ENCODE measurements at regions of chr7 and their contacts with region 1.

Region 1: GRCh38 chr7:101542527-101543241 is 86.4 kb downstream of the MYL10 start:
- DNase-seq: no peak
- ATAC-seq: no peak

Region 2: DNA sequence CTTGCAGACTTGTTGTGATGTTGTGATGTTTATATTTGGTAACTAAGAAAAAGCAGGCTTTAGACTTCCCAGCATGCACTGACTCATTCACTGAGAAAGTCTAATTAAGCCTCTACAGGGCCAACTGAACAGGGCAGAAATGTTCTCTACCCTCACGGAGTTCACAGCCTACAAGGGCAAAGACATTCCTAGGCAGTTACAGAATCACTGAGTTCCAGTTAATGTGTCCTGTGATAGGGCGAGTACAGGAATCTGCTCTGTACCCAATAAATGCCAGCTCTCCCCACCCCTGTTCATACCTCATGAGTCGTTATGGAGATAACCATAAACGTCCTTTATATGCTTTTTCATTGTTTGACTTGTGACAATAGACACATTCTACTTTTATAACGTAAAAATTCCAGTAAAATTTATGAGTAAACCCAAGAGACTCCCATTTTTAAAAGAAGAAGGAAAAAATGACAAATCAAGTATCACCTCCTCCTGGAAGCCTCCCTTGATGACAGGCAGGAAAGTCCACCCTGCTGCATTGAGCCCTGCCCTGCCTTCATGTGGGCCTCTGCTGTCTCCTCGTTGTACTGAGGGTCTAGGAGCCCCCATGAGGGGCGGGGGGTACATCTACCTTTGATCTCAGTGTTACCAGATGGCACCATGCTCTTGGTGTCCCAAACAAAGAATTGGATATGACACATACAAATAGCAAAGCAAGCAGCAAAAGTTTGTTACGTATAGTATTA is 559.1 kb before region 1 on chr7:
- intact Hi-C with region 1: no loop called
- DNase-seq: no peak
- ATAC-seq: no peak

Region 3: GRCh38 chr7:101363734-101364374 is 178.8 kb before region 1 on chr7:
- intact Hi-C with region 1: loop called (anchors 2 kb)
- DNase-seq: no peak
- ATAC-seq: peak; percentile 95

Region 4: DNA sequence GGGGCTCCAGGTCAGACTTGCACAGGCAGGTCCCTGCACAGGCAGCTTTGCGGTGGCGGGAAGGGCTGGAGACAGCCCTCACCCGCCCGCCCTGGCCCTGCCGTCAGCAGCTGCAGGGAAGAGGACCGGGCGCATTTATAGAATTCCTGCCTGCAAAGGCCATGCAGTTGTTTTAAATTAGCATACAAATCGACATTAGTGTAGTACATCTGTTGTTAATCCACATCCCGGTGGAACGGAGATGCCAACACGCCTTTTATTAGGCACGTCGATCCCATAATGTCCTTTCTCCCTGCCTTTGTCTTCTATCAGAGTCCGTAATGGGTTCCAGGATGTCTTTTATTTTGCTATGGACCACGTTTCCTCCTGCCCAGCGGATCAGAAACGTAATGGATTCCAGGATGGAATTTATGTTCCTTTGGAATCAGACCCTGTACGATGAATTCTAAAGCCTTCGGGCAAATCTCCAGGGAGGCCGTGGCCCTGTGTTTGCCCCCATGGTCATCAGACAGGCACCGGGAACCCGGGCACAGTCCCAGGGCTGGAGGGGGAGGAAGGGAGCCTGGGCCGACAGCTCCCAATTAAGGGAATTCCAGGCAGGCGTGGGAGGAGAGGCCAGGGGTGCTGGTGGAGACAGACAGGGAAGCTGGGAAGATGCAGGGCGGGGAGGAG is 56.1 kb before region 1 on chr7:
- intact Hi-C with region 1: no loop called
- DNase-seq: no peak
- ATAC-seq: no peak

Region 5: DNA sequence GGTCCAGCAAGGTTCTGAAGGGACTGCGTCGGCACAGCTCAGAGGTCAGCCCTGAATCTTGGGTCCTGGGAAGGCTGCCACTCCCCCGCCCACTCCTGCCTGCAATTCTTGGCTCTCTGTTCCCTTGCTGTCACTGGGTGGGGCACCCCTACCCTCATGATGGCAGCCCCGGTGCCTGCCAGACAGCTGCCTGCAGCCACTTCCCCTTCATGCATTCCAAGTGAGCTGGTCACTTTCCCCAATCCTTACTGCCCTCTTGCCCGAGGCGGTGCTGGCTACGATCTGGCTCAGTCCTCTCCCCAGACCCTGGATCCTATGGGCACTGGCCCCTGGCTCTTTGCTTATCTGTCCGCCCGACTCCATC is 72.2 kb after region 1 on chr7:
- intact Hi-C with region 1: no loop called
- DNase-seq: no peak
- ATAC-seq: no peak

Region 6: GRCh38 chr7:101838837-101839483 is 296.3 kb after region 1 on chr7:
- intact Hi-C with region 1: no loop called
- DNase-seq: no peak
- ATAC-seq: peak; percentile 85

Region 7: DNA sequence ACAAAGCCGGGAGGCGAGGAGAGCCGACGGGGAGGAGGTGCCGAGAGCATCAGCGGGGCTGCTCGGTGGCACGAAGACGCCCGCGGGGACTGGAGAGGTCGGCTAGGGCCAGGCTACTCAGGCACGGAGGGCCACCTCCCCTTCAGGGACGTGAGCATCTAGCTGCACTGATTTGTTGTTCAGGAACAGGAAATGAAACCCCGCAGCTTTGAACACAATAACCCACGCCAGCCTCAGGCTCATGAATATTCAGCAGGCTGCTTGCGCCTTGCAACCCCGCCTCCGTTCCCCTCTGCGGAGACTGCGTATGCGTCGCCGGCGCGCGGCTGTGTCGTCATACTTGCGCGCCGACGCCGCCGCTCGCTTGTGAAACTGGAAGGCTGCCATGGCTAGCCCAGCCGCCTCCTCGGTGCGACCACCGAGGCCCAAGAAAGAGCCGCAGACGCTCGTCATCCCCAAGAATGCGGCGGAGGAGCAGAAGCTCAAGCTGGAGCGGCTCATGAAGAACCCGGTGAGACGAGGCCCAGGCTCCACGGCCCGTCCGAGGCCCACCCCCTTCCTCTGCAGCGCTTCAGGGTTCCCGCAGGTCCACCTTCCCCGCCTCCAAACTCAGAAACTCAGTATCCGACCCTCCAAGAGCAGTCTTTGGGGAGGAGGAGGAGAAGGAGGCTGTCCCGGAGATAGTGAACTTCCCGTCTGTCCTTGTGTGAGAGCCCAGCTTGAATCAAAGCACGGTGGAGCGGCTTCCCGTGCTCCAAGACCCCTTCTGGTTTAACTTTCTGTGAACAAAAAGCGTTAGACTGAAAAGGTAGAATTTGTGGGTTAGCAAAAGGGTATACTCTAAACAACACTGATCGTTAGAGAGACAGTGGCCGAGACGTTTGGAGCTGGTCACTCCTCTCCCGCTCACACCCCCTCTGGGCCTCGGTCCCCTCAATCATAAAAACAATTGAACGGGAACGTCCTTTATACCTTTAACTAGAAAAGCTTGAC is 853.6 kb after region 1 on chr7 and contains the start of gene PRKRIP1:
- intact Hi-C with region 1: loop called (anchors 10 kb)
- DNase-seq: peak; percentile 91
- ATAC-seq: peak; percentile 93
- total RNA-seq, gene PRKRIP1: 10.6 TPM

Measured in Right ventricle myocardium inferior (tissue), 1 donor.